ENCODE measurements at regions of chr7 and their contacts with region 1.

Region 1: GRCh38 chr7:128739048-128739962 is at the start of gene CALU:
- DNase-seq: peak; percentile 96 to 99
- H3K4me3 ChIP-seq: peak within 1 kb of the TSS; percentile 94 to 97
- H3K27ac ChIP-seq: peak within 1 kb of the TSS; percentile 94 to 95
- H3K4me1 ChIP-seq: peaks cover 4 to 50% (median 15%) of the 10 kb centered on the region in 4 donors
- H3K27me3 ChIP-seq: no peaks in the 10 kb centered on the region
- CTCF ChIP-seq: no peak

Region 2: DNA sequence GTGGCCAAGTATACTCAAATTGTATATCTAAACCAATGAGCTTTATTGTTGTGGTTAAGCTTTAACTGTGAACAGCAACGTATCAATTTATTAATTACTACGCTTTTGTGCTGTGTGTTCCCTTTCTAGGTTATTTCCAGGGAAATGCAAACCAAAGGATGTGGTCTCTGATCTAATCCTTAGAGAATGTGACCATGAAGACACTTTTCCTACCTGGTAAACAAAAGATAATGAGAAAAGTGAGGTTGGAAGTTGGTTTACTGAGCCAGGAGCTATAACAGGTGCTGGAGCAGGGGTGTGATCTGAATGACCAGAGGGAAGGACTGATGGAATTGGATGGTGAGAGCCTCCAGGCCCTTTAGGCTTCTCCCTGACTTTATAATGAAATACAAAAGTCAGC is 25.5 kb before region 1 on chr7:
- intact Hi-C with region 1: no loop called
- DNase-seq: no peak
- H3K4me3 ChIP-seq: no peak overlapping the region
- H3K27ac ChIP-seq: no peak overlapping the region
- H3K4me1 ChIP-seq: no peaks in the 10 kb centered on the region
- H3K27me3 ChIP-seq: no peaks in the 10 kb centered on the region
- CTCF ChIP-seq: no peak

Region 3: DNA sequence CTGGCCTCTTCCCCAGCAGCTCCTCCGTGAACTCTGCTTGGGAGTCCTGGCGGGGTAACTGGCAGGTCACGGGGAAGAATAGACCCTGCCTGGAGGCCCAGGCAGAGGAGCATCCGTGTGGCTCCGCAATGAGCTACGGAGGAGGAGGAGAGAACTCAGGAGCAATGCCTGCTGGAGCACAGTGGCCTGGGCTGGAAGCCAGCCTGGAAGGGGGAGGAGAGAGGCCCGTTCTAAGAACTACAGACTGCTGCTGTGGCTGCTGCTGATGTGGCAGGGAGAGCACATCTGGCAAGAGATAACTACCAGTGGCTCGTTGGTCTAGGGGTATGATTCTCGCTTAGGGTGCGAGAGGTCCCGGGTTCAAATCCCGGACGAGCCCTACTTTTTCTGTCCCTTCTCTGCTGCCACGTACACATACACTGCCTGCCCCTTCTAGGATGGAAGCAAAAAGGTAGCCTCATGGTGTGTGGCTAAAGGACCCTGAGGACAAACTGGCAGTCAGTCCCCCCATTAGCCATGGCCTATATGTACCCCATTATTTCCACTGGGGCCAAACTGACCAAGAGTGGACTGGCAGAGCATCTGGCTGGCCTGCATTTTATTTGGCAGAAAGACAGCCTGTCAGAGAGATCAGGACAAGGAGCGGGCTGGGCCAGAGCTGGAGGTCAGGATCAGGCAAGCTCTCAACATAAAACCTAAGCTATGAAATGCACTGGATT is 44.0 kb after region 1 on chr7:
- intact Hi-C with region 1: loop called (anchors 1 kb)
- DNase-seq: peak; percentile 74 to 88
- H3K4me3 ChIP-seq: no peak overlapping the region
- H3K27ac ChIP-seq: peak overlapping the region; percentile 11 to 58
- H3K4me1 ChIP-seq: peaks cover 0 to 31% (median 4%) of the 10 kb centered on the region in 4 donors
- H3K27me3 ChIP-seq: no peaks in the 10 kb centered on the region
- CTCF ChIP-seq: no peak

Region 4: DNA sequence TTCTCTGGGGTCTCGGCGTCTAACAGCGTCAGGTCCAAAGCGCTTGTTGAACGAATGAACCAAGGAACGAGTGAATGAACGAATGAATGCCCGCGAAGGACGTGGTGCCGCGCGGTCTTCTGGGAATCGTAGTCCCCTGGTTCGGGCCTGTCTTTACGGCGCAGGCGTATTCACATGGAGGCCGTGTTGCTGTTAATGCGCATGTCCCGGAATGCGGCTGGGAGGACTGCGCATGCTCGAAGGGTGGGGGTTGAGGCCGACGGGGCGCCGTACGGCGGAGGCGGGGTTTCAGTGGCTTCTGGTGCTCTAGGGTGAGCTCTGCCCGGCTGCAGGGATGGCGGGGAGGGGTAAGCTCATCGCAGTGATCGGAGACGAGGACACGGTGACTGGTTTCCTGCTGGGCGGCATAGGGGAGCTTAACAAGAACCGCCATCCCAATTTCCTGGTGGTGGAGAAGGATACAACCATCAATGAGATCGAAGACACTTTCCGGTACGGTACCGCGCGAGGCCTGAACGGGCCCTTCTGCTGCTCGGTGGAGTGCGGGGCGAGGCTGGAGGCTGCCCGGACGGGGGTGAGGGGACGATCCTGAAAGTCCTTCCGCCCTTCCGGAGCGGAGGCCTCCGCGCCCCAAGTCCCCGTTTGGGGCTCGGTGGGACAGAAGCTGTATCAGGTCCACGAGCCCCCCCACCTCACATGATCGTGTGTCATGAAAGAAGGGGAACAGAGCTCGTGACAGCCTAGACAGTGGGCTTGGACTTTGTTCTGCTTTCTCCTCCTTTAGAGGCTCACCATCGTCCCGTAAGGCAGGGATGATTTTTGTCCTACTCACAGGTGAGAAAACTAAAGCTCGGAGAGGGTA is 123.5 kb after region 1 on chr7 and contains the start of gene ATP6V1F:
- intact Hi-C with region 1: loop called (anchors 10 kb)
- DNase-seq: peak; percentile 97 to 99
- H3K4me3 ChIP-seq: peak within 1 kb of the TSS; percentile 66 to 70
- H3K27ac ChIP-seq: peak within 1 kb of the TSS; percentile 70 to 73
- H3K4me1 ChIP-seq: peaks cover 13 to 51% (median 41%) of the 10 kb centered on the region in 4 donors
- H3K27me3 ChIP-seq: no peaks in the 10 kb centered on the region
- CTCF ChIP-seq: peak in 1 of 2 experiments; percentile 22

Region 5: GRCh38 chr7:128937647-128938543 is 198.6 kb after region 1 on chr7 and contains the start of gene IRF5:
- intact Hi-C with region 1: no loop called
- DNase-seq: no peak
- H3K4me3 ChIP-seq: peak within 1 kb of the TSS; percentile 57 to 58
- H3K27ac ChIP-seq: peak within 1 kb of the TSS in 1 of 2 donors; percentile 18
- H3K4me1 ChIP-seq: peaks cover 0 to 25% (median 19%) of the 10 kb centered on the region in 4 donors
- H3K27me3 ChIP-seq: peaks cover 0 to 56% of the 10 kb centered on the region in 2 donors
- CTCF ChIP-seq: no peak